ENCODE measurements at regions of chr1 and their contacts with region 1.

Region 1: GRCh38 chr1:211830330-211831142 is at the start of gene LPGAT1:
- DNase-seq: peak; percentile 77 to 82
- ATAC-seq: peak; percentile 94 to 97 (median 96)
- H3K4me3 ChIP-seq: peak within 1 kb of the TSS; percentile 63 to 80 (median 74)
- H3K27ac ChIP-seq: peak within 1 kb of the TSS; percentile 70 to 97 (median 91)
- H3K4me1 ChIP-seq: peaks cover 0 to 62% (median 18%) of the 10 kb centered on the region in 9 donors
- H3K27me3 ChIP-seq: no peaks in the 10 kb centered on the region
- CTCF ChIP-seq: peak; percentile 32 to 89 (median 73)
- total RNA-seq, gene LPGAT1: 22.1 to 36.6 (median 27.6) TPM

Region 2: GRCh38 chr1:211698161-211699026 is 132.1 kb before region 1 on chr1:
- intact Hi-C with region 1: loop called (anchors 1 to 5 kb)
- DNase-seq: peak; percentile 64 to 80
- ATAC-seq: peak; percentile 83 to 95 (median 92)
- H3K4me3 ChIP-seq: peak overlapping the region in 4 of 10 donors; percentile 7 to 28 (median 22)
- H3K27ac ChIP-seq: no peak overlapping the region
- H3K4me1 ChIP-seq: peaks cover 0 to 16% (median 4%) of the 10 kb centered on the region in 9 donors
- H3K27me3 ChIP-seq: peaks cover 0 to 8% (median 0%) of the 10 kb centered on the region in 7 donors
- CTCF ChIP-seq: peak; percentile 80 to 98 (median 94)

Region 3: GRCh38 chr1:211775170-211775569 is 55.4 kb before region 1 on chr1:
- intact Hi-C with region 1: loop called in 1 of 10 experiments (anchors 10 kb)
- DNase-seq: no peak
- ATAC-seq: no peak
- H3K4me3 ChIP-seq: no peak overlapping the region
- H3K27ac ChIP-seq: no peak overlapping the region
- H3K4me1 ChIP-seq: no peaks in the 10 kb centered on the region
- H3K27me3 ChIP-seq: no peaks in the 10 kb centered on the region
- CTCF ChIP-seq: no peak